ENCODE measurements at regions of chr2 and their contacts with region 1.

Region 1: DNA sequence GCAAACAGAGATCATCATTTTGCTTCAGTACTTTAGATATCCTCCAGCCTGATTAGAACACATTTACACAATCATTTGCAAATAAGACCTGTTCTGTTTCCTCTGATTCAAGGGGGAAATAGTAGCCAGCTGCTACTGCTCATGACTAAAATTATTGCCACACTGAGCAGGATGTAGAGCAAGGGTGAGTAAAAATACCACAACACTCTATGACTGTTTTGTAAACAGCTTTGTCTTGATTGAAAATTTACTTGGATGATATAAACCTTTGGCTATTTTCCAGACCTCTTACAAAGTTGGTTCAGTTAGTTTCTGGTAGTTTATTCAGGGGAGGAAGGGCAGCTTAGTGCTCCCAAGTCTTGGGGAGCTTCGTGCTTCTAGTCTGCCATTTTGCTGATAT is 286.4 kb upstream of the CNTNAP5 start:
- DNase-seq: peak; percentile 94
- ATAC-seq: peak; percentile 99
- H3K4me3 ChIP-seq: no peak overlapping the region
- H3K27ac ChIP-seq: peak overlapping the region; percentile 45
- H3K4me1 ChIP-seq: peaks cover 19% of the 10 kb centered on the region
- H3K27me3 ChIP-seq: no peaks in the 10 kb centered on the region
- CTCF ChIP-seq: no peak

Region 2: DNA sequence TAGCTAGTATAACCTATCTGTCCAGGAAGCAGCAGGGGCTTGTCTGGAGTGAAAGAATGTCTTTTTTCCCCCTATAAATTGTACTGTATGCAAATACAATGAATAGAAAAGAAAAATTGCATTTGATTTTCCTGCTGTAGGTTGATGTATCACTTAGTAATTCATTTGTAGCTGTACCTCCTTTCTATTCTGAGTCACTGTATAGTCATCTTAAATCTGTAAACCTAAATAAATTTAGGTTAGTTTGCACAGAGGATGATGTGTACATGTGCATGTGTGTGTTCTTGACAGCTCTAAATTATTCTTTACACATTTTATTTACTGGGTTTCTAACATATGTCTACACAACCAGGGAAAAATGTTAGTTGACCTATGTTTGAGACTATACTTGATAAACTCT is 192.3 kb before region 1 on chr2:
- CTCF ChIA-PET with region 1: no interaction called
- POLR2A ChIA-PET with region 1: no interaction called
- intact Hi-C with region 1: loop called (anchors 5 kb)
- DNase-seq: peak; percentile 80
- ATAC-seq: peak; percentile 99
- H3K4me3 ChIP-seq: no peak overlapping the region
- H3K27ac ChIP-seq: peak overlapping the region; percentile 49
- H3K4me1 ChIP-seq: peaks cover 15% of the 10 kb centered on the region
- H3K27me3 ChIP-seq: no peaks in the 10 kb centered on the region
- CTCF ChIP-seq: no peak

Region 3: GRCh38 chr2:123670286-123670685 is 68.4 kb before region 1 on chr2:
- CTCF ChIA-PET with region 1: no interaction called
- POLR2A ChIA-PET with region 1: no interaction called
- intact Hi-C with region 1: loop called (anchors 2 kb)
- DNase-seq: peak; percentile 91
- ATAC-seq: peak; percentile 98
- H3K4me3 ChIP-seq: no peak overlapping the region
- H3K27ac ChIP-seq: peak overlapping the region; percentile 50
- H3K4me1 ChIP-seq: peaks cover 19% of the 10 kb centered on the region
- H3K27me3 ChIP-seq: no peaks in the 10 kb centered on the region
- CTCF ChIP-seq: no peak

Region 4: GRCh38 chr2:123717636-123718334 is 20.9 kb before region 1 on chr2:
- CTCF ChIA-PET with region 1: no interaction called
- POLR2A ChIA-PET with region 1: no interaction called
- intact Hi-C with region 1: loop called (anchors 1 kb)
- DNase-seq: no peak
- ATAC-seq: no peak
- H3K4me3 ChIP-seq: no peak overlapping the region
- H3K27ac ChIP-seq: no peak overlapping the region
- H3K4me1 ChIP-seq: peaks cover 37% of the 10 kb centered on the region
- H3K27me3 ChIP-seq: no peaks in the 10 kb centered on the region
- CTCF ChIP-seq: no peak

Region 5: GRCh38 chr2:123791684-123792083 is 53.0 kb after region 1 on chr2:
- CTCF ChIA-PET with region 1: no interaction called
- POLR2A ChIA-PET with region 1: no interaction called
- intact Hi-C with region 1: no loop called
- DNase-seq: no peak
- ATAC-seq: no peak
- H3K4me3 ChIP-seq: no peak overlapping the region
- H3K27ac ChIP-seq: no peak overlapping the region
- H3K4me1 ChIP-seq: no peaks in the 10 kb centered on the region
- H3K27me3 ChIP-seq: no peaks in the 10 kb centered on the region
- CTCF ChIP-seq: no peak

Region 6: GRCh38 chr2:123993728-123994323 is 255.2 kb after region 1 on chr2:
- CTCF ChIA-PET with region 1: no interaction called
- POLR2A ChIA-PET with region 1: no interaction called
- intact Hi-C with region 1: loop called (anchors 5 kb)
- DNase-seq: peak; percentile 70
- ATAC-seq: peak; percentile 84
- H3K4me3 ChIP-seq: no peak overlapping the region
- H3K27ac ChIP-seq: no peak overlapping the region
- H3K4me1 ChIP-seq: no peaks in the 10 kb centered on the region
- H3K27me3 ChIP-seq: no peaks in the 10 kb centered on the region
- CTCF ChIP-seq: peak; percentile 73

Measured in PC-3 (cell line).